MCF 10A (cell line): ENCODE measurements at regions of chr15 and their contacts with region 1.

Region 1: GRCh38 chr15:68053701-68054627 is at the start of gene PIAS1:
- DNase-seq: peak; percentile 91
- H3K4me3 Mint-ChIP-seq: peak within 1 kb of the TSS; percentile 100
- H3K27ac Mint-ChIP-seq: peak within 1 kb of the TSS; percentile 93
- H3K4me1 Mint-ChIP-seq: peaks cover 25% of the 10 kb centered on the region
- H3K27me3 Mint-ChIP-seq: no peaks in the 10 kb centered on the region
- CTCF ChIP-seq: no peak
- total RNA-seq, gene PIAS1: 32.9 and 36.8 TPM in 2 replicates

Region 2: DNA sequence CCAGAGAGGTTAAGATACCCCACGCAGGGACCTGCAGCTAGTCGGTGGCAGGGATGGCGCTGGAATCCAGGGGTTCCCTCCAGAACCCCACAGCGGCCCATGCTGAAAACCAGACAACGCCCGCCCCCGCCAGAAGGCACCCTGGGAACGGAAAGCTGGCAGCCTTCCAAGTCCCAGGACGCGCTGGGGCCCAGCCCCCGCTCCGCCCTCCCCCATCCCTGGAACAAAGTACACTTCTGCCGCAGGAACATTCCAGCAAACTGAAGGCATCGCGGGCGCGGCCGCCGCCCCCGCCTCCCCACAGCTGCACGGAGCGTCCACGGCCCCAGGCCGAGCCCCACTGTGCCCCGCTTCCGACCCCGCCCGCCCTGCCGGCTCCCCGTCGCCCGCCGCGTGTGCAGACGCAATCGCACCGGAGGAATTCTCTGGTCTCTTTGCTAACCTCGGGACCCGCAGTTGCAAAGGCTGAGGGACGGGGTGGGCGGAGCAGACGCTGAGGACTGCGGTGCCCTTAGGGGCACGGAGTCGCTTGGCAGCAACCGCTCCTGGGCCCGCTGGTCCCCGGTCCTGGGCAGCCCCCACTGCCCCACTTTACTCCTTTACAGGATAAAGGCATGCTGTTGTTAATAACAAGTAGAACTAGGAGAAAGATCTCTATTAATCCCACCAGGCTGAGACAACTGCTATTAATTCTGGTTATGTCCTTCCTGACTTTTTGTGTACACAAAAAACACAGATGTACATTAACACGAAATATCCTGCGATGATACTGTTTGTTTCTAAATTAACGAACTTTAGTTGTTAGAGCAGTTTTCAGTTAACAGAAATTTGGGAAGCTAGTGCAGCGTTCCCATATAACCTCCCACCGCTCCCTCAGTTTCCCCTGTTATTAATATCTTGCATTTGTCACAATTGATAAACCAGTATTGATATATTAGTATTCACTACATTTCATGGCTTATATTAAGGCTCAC is 169.2 kb before region 1 on chr15:
- CTCF ChIA-PET with region 1: no interaction called
- POLR2A ChIA-PET with region 1: interaction called, 38 read pairs
- intact Hi-C with region 1: no loop called
- DNase-seq: peak; percentile 93
- H3K4me3 Mint-ChIP-seq: peak overlapping the region; percentile 50
- H3K27ac Mint-ChIP-seq: peak overlapping the region; percentile 73
- H3K4me1 Mint-ChIP-seq: peaks cover 51% of the 10 kb centered on the region
- H3K27me3 Mint-ChIP-seq: no peaks in the 10 kb centered on the region
- CTCF ChIP-seq: no peak

Region 3: GRCh38 chr15:67955252-67955651 is 98.7 kb before region 1 on chr15:
- CTCF ChIA-PET with region 1: no interaction called
- POLR2A ChIA-PET with region 1: interaction called, 35 read pairs
- intact Hi-C with region 1: no loop called
- DNase-seq: no peak
- H3K4me3 Mint-ChIP-seq: no peak overlapping the region
- H3K27ac Mint-ChIP-seq: peak overlapping the region; percentile 92
- H3K4me1 Mint-ChIP-seq: peaks cover 54% of the 10 kb centered on the region
- H3K27me3 Mint-ChIP-seq: no peaks in the 10 kb centered on the region
- CTCF ChIP-seq: no peak

Region 4: GRCh38 chr15:68085052-68085451 is 31.1 kb after region 1 on chr15:
- CTCF ChIA-PET with region 1: no interaction called
- POLR2A ChIA-PET with region 1: interaction called, 14 read pairs
- intact Hi-C with region 1: no loop called
- DNase-seq: no peak
- H3K4me3 Mint-ChIP-seq: no peak overlapping the region
- H3K27ac Mint-ChIP-seq: no peak overlapping the region
- H3K4me1 Mint-ChIP-seq: peaks cover 43% of the 10 kb centered on the region
- H3K27me3 Mint-ChIP-seq: no peaks in the 10 kb centered on the region
- CTCF ChIP-seq: no peak

Region 5: GRCh38 chr15:68154923-68155559 is 101.1 kb after region 1 on chr15:
- CTCF ChIA-PET with region 1: interaction called, 5 read pairs
- POLR2A ChIA-PET with region 1: interaction called, 12 read pairs
- intact Hi-C with region 1: loop called (anchors 1 kb)
- DNase-seq: peak; percentile 71
- H3K4me3 Mint-ChIP-seq: no peak overlapping the region
- H3K27ac Mint-ChIP-seq: no peak overlapping the region
- H3K4me1 Mint-ChIP-seq: peaks cover 20% of the 10 kb centered on the region
- H3K27me3 Mint-ChIP-seq: no peaks in the 10 kb centered on the region
- CTCF ChIP-seq: peak; percentile 79

Region 6: GRCh38 chr15:68464448-68465090 is 410.6 kb after region 1 on chr15:
- CTCF ChIA-PET with region 1: no interaction called
- POLR2A ChIA-PET with region 1: no interaction called
- intact Hi-C with region 1: no loop called
- DNase-seq: no peak
- H3K4me3 Mint-ChIP-seq: no peak overlapping the region
- H3K27ac Mint-ChIP-seq: no peak overlapping the region
- H3K4me1 Mint-ChIP-seq: no peaks in the 10 kb centered on the region
- H3K27me3 Mint-ChIP-seq: peaks cover 33% of the 10 kb centered on the region
- CTCF ChIP-seq: no peak